ENCODE measurements at regions of chrX and their contacts with region 1.

Region 1: DNA sequence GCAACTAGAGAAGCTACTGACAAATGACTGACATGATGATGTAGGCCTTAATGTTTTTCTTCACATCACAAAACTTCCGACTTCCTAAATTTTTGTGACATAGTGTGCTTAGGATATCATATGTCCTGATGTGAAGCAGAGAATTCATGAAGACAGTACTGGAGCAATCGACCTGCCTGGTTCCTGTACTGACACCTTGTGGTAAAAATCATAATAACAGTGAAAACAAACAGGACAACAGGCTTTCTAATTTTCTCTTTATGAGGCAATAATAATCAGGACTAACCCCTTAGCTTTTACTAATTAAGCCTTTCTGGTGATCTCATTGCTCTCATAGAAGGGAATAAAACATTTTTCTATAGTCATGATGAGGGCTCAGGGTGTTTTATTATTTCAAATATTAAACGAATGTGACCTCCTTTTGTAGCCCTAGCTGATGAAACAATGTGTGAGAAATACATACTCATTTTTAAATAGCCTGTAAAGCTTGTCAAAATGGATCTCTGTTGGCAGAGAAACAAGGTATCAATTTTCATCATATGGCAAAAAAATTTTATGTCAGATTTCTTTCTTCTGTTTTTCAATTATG is 158.4 kb downstream of the TENT5D start:
- DNase-seq: peak; percentile 15
- ATAC-seq: no peak
- H3K4me3 ChIP-seq: no peak overlapping the region
- H3K27ac ChIP-seq: no peak overlapping the region
- H3K4me1 ChIP-seq: no peaks in the 10 kb centered on the region
- H3K27me3 ChIP-seq: no peaks in the 10 kb centered on the region
- CTCF ChIP-seq: peak; percentile 65; the same call in 1 of the 2 replicates

Region 2: DNA sequence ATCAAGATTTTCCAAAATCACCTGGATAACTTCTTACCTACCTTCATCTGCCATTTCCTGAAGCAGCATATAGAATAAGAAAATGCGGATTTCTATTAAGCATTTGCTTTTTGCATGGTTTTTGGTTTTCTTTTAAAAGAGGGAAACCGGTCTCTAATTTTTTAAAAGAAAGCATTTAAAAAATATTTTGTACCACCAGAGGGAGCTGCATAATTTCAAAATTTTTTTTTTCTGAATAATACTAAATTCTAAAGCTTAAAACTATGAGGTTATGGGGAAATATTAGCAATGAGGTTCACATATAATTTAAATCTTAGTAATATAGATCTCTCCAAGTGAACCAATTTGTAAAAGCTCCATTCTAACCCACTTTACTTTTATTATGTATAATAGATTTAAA is 296.1 kb before region 1 on chrX:
- CTCF ChIA-PET with region 1: interaction called, 3 read pairs
- POLR2A ChIA-PET with region 1: no interaction called
- in situ Hi-C with region 1: no loop called
- intact Hi-C with region 1: loop called (anchors 5 kb)
- DNase-seq: no peak
- ATAC-seq: no peak
- H3K4me3 ChIP-seq: no peak overlapping the region
- H3K27ac ChIP-seq: no peak overlapping the region
- H3K4me1 ChIP-seq: no peaks in the 10 kb centered on the region
- H3K27me3 ChIP-seq: no peaks in the 10 kb centered on the region
- CTCF ChIP-seq: peak; percentile 35; the same call in 1 of the 2 replicates